Colonic mucosa (tissue), 4 donors: ENCODE measurements at regions of chr4 and their contacts with region 1.

Region 1: GRCh38 chr4:76067652-76068286 is 6.7 kb upstream of the ART3 start:
- DNase-seq: peak; percentile 86
- H3K4me3 ChIP-seq: no peak overlapping the region
- H3K27ac ChIP-seq: no peak overlapping the region
- H3K4me1 ChIP-seq: no peaks in the 10 kb centered on the region
- H3K27me3 ChIP-seq: no peaks in the 10 kb centered on the region
- CTCF ChIP-seq: peak; percentile 90

Region 2: GRCh38 chr4:75895744-75896314 is 171.9 kb before region 1 on chr4:
- intact Hi-C with region 1: loop called (anchors 10 kb)
- DNase-seq: peak; percentile 27
- H3K4me3 ChIP-seq: no peak overlapping the region
- H3K27ac ChIP-seq: no peak overlapping the region
- H3K4me1 ChIP-seq: no peaks in the 10 kb centered on the region
- H3K27me3 ChIP-seq: no peaks in the 10 kb centered on the region
- CTCF ChIP-seq: peak; percentile 65

Region 3: GRCh38 chr4:76001706-76002105 is 66.1 kb before region 1 on chr4:
- intact Hi-C with region 1: loop called (anchors 2 kb)
- DNase-seq: no peak
- H3K4me3 ChIP-seq: no peak overlapping the region
- H3K27ac ChIP-seq: no peak overlapping the region
- H3K4me1 ChIP-seq: no peaks in the 10 kb centered on the region
- H3K27me3 ChIP-seq: no peaks in the 10 kb centered on the region
- CTCF ChIP-seq: no peak

Region 4: GRCh38 chr4:76459291-76459723 is 391.5 kb after region 1 on chr4:
- intact Hi-C with region 1: no loop called
- DNase-seq: no peak
- H3K4me3 ChIP-seq: no peak overlapping the region
- H3K27ac ChIP-seq: no peak overlapping the region
- H3K4me1 ChIP-seq: no peaks in the 10 kb centered on the region
- H3K27me3 ChIP-seq: no peaks in the 10 kb centered on the region
- CTCF ChIP-seq: no peak